HEK293T (cell line): ENCODE measurements at regions of chr5 and their contacts with region 1.

Region 1: DNA sequence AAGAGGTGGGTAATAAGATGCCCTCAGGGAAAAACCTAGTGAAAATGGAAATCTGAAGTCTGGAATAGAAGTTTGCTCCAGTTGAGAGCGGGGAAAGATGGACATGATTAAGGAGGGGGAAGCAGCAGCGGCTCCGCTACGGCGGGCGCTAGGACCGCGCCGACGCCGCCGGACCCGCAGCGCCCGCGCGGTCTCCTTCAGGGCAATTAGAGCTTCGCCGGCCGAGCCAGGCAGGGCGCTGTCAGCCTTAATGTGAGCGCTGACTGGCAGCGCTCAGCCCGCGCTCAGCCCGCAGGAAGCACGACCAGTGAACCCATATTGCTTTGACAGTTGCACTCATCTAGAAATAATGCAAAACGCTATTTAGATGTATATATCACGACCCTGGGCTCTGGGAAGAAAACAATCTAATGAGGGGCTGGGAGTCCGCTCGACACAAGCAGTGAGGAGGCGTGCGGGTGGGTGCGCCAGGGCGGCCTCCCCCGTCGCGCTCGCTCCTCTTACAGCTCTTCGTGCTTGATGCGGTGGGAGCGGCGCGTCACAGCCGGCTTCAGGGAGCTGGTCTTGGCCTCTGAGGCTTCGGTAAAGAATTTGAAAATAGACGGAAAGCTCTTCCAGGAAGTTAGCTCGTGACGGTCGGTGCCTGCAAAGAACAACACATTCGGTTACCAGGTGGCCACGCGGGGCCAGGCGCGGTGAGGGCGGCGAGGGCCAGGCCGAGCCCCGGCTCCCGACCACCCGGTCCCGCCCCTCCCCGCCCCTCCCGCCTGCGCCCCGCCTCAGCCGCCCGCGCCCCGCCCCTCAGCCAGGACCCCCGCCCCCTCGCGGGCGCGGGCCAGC is 37.7 kb downstream of the NR2F1 start:
- DNase-seq: peak; percentile 78

Region 2: DNA sequence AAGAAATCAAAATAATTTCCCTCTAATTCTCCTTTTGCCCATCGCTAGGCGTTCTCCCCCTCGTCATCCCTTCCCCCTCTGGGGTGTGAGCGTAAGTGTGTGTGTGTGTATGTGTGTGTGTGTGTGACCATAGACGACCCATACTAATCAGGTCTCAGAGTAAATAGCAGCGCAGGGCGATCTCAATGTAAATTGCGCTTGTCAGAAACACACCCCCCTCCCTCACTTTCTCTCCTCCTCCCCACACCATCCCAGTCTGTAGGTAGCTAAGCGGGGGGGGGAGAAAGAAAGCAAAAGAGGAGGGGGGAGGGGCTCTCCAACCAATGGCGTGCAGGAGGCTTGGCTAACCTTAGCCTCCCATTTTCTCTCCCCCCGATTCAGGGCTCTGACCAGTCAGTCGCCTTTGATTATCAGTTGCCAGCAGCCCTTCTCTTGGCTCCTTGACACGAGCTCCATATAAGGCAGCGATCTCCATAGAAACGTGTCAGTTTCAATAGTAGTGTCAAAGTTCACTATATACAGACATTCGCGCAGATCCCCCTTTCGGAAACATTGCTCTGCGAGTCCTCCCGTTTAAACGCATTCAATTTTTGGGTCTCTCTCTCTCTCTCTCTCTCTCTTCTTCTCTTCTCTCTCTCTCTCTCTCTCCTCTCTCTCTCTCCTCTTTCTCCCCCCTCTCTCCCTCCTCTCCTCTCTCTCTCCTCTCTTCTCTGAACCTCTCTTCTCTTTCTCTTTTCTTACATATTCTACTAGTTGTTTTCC is 37.8 kb before region 1 on chr5 and contains the start of gene NR2F1:
- CTCF ChIA-PET with region 1: interaction called, 6 read pairs
- POLR2A ChIA-PET with region 1: interaction called, 19 read pairs
- DNase-seq: peak; percentile 75

Region 3: GRCh38 chr5:93677344-93678021 is 56.8 kb after region 1 on chr5:
- CTCF ChIA-PET with region 1: interaction called, 3 read pairs
- POLR2A ChIA-PET with region 1: interaction called, 23 read pairs
- DNase-seq: peak; percentile 75